ENCODE measurements at regions of chr2 and their contacts with region 1.

Region 1: GRCh38 chr2:139078376-139078775 is 298.2 kb upstream of the NXPH2 start:
- DNase-seq: no peak
- H3K4me3 ChIP-seq: no peak overlapping the region
- H3K27ac ChIP-seq: no peak overlapping the region
- H3K4me1 ChIP-seq: no peaks in the 10 kb centered on the region
- H3K27me3 ChIP-seq: no peaks in the 10 kb centered on the region
- CTCF ChIP-seq: no peak

Region 2: GRCh38 chr2:138640921-138641676 is 437.3 kb before region 1 on chr2:
- CTCF ChIA-PET with region 1: no interaction called
- POLR2A ChIA-PET with region 1: no interaction called
- intact Hi-C with region 1: no loop called
- DNase-seq: no peak
- H3K4me3 ChIP-seq: no peak overlapping the region
- H3K27ac ChIP-seq: no peak overlapping the region
- H3K4me1 ChIP-seq: 0 out of 2 replicates have a peak, but pooled peaks cover 4% of the 10 kb centered on the region
- H3K27me3 ChIP-seq: no peaks in the 10 kb centered on the region
- CTCF ChIP-seq: no peak

Region 3: DNA sequence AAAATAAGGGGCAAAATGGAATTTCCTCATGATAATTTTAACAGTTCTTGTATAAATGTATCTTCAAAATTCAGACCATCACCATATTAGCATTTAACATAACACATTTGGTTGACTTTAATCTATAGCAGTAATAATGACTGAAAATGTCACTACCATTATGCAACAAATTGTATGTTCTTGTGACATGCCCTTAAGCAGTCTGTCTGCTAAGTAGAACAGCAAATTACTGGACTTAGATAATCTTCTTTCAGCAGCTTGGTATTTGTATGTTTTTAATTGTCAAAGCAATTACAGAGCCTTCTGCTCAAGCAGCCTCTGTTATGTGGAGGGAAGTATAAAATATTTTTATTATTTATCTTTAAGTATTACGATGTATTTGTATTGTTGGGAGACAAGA is 83.9 kb before region 1 on chr2:
- CTCF ChIA-PET with region 1: no interaction called
- POLR2A ChIA-PET with region 1: no interaction called
- intact Hi-C with region 1: no loop called
- DNase-seq: no peak
- H3K4me3 ChIP-seq: no peak overlapping the region
- H3K27ac ChIP-seq: no peak overlapping the region
- H3K4me1 ChIP-seq: 0 out of 2 replicates have a peak, but pooled peaks cover 11% of the 10 kb centered on the region
- H3K27me3 ChIP-seq: no peaks in the 10 kb centered on the region
- CTCF ChIP-seq: no peak

Region 4: DNA sequence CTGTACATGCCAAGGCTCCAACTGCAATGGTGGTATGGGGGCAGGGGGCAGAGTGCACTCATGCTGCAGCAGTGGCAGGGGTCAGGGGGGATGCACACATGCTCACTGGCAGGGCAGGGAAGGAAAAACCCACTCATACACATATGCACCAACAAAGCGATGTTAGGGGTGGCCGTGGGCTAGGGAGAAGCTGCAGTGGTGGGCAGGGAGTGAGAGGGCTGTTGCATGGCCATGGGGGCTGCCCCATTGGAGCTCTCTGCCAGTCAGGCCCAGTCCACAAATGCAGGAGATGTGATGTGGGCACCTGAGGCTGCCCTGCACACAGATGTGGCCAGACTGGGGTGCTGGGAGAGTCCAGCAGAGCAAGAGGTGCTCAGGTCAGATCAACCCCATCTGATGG is 60.1 kb before region 1 on chr2:
- CTCF ChIA-PET with region 1: no interaction called
- POLR2A ChIA-PET with region 1: no interaction called
- intact Hi-C with region 1: no loop called
- DNase-seq: no peak
- H3K4me3 ChIP-seq: no peak overlapping the region
- H3K27ac ChIP-seq: no peak overlapping the region
- H3K4me1 ChIP-seq: no peaks in the 10 kb centered on the region
- H3K27me3 ChIP-seq: no peaks in the 10 kb centered on the region
- CTCF ChIP-seq: no peak

Region 5: DNA sequence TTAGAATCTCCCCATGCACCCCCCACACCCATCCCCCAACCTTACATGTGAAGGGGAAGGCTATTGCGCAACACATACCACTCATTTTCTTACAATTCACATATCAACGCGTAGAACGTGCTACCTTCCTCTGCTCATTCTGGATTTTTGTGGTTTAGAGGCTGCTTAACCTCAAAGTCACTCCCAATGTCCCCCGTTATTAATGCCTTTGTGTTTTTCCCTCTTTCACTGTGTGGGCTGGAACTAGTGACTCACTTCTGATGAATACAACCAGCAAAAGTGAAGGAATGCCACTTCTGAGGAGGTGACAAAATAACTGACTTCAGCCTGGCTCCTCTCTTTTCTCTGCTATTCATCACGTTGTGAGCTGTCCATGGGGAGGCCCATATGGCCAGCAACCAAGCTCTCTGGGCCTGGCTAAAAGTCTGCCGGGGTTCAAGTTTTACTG is 44.4 kb after region 1 on chr2:
- CTCF ChIA-PET with region 1: no interaction called
- POLR2A ChIA-PET with region 1: no interaction called
- intact Hi-C with region 1: no loop called
- DNase-seq: peak; percentile 36 to 46
- H3K4me3 ChIP-seq: no peak overlapping the region
- H3K27ac ChIP-seq: no peak overlapping the region
- H3K4me1 ChIP-seq: no peaks in the 10 kb centered on the region
- H3K27me3 ChIP-seq: no peaks in the 10 kb centered on the region
- CTCF ChIP-seq: no peak

Region 6: DNA sequence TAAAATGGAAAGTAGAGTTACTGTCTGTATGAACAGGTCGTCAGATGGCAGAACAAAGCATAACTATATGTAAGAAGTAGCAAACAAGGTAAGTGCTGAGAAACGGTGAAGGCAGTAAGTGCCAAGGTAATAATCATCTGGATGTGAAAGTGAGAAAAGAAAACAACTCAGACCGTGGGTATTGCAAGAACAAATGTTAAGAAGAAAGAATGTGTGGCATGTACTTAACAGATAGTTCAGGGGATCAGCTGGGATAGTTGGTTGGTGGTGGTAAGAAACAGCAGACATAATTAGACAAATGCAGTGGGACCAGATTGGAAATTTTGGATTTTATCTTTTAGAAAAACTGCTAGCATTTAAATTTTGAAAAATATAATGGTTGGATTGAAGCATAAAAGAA is 77.6 kb after region 1 on chr2:
- CTCF ChIA-PET with region 1: no interaction called
- POLR2A ChIA-PET with region 1: no interaction called
- intact Hi-C with region 1: loop called (anchors 5 kb)
- DNase-seq: no peak
- H3K4me3 ChIP-seq: no peak overlapping the region
- H3K27ac ChIP-seq: no peak overlapping the region
- H3K4me1 ChIP-seq: no peaks in the 10 kb centered on the region
- H3K27me3 ChIP-seq: no peaks in the 10 kb centered on the region
- CTCF ChIP-seq: no peak

Measured in PC-9 (cell line).